OCI-LY7 (cell line): ENCODE measurements at regions of chr1 and their contacts with region 1.

Region 1: GRCh38 chr1:65045022-65045817 is 78.9 kb upstream of the JAK1 start:
- DNase-seq: peak; percentile 53
- H3K4me3 ChIP-seq: peak overlapping the region; percentile 29
- H3K27ac ChIP-seq: peak overlapping the region; percentile 70
- H3K4me1 ChIP-seq: peaks cover 41% of the 10 kb centered on the region
- CTCF ChIP-seq: no peak

Region 2: GRCh38 chr1:64956733-64957441 is 88.3 kb before region 1 on chr1:
- CTCF ChIA-PET with region 1: interaction called, 4 read pairs
- POLR2A ChIA-PET with region 1: interaction called, 3 read pairs
- intact Hi-C with region 1: loop called (anchors 2 kb)
- DNase-seq: peak; percentile 86
- H3K4me3 ChIP-seq: peak overlapping the region; percentile 49
- H3K27ac ChIP-seq: peak overlapping the region; percentile 93
- H3K4me1 ChIP-seq: peaks cover 100% of the 10 kb centered on the region
- CTCF ChIP-seq: no peak

Region 3: GRCh38 chr1:65319141-65319540 is 273.9 kb after region 1 on chr1:
- CTCF ChIA-PET with region 1: no interaction called
- POLR2A ChIA-PET with region 1: no interaction called
- intact Hi-C with region 1: no loop called
- DNase-seq: no peak
- H3K4me3 ChIP-seq: no peak overlapping the region
- H3K27ac ChIP-seq: no peak overlapping the region
- H3K4me1 ChIP-seq: no peaks in the 10 kb centered on the region
- CTCF ChIP-seq: no peak

Region 4: DNA sequence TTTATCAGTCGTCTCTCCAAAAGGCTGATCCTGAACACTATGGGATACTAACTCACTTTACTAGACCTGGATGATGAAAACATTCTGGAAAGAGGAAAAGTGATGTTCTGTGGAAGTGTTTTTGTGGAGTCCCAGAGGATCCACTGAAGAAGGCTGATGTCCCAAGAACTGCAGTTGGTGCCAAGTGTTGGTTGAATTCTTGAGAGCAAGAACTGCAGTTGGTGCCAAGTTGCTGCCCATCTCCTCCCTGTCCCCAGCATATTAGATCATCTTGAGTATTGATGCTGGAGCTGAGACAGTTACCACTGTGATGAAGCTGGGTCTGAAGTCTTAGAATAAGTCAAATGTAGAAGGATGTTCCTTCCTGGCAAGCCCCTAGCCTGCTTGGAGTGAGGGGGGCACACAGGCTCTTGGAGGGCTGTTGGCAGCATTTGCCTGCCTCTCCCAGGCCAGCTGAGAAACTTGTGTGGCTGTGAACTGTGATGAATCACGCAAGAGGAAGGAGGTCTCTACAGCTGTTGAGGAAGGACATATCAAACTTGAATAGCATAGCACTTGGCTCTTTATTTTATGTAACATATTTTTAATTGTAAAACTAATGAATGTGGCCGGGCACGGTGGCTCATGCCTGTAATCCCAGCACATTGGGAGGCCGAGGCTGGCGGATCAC is 312.2 kb after region 1 on chr1:
- CTCF ChIA-PET with region 1: no interaction called
- POLR2A ChIA-PET with region 1: no interaction called
- intact Hi-C with region 1: no loop called
- DNase-seq: no peak
- H3K4me3 ChIP-seq: no peak overlapping the region
- H3K27ac ChIP-seq: no peak overlapping the region
- H3K4me1 ChIP-seq: no peaks in the 10 kb centered on the region
- CTCF ChIP-seq: no peak